Right cardiac atrium (tissue), 5 donors: ENCODE measurements at regions of chr10 and their contacts with region 1.

Region 1: GRCh38 chr10:114470956-114471905 is 66.9 kb upstream of the AFAP1L2 start:
- DNase-seq: peak; percentile 53 to 82 (median 78)
- ATAC-seq: peak; percentile 81 to 85
- H3K4me3 ChIP-seq: no peak overlapping the region
- H3K27ac ChIP-seq: peak overlapping the region; percentile 62
- H3K4me1 ChIP-seq: peaks cover 6% of the 10 kb centered on the region
- H3K27me3 ChIP-seq: no peaks in the 10 kb centered on the region

Region 2: GRCh38 chr10:114541081-114541796 is 70.0 kb after region 1 on chr10:
- intact Hi-C with region 1: loop called in 3 of 4 experiments (anchors 5 kb)
- DNase-seq: peak; percentile 82 to 88 (median 82)
- ATAC-seq: peak; percentile 94 to 97
- H3K4me3 ChIP-seq: no peak overlapping the region
- H3K27ac ChIP-seq: peak overlapping the region; percentile 87
- H3K4me1 ChIP-seq: peaks cover 20% of the 10 kb centered on the region
- H3K27me3 ChIP-seq: no peaks in the 10 kb centered on the region

Region 3: GRCh38 chr10:114703377-114704107 is 232.3 kb after region 1 on chr10:
- intact Hi-C with region 1: loop called in 1 of 4 experiments (anchors 10 kb)
- DNase-seq: no peak
- ATAC-seq: peak; percentile 44 to 52
- H3K4me3 ChIP-seq: no peak overlapping the region
- H3K27ac ChIP-seq: no peak overlapping the region
- H3K4me1 ChIP-seq: peaks cover 2% of the 10 kb centered on the region
- H3K27me3 ChIP-seq: no peaks in the 10 kb centered on the region

Region 4: DNA sequence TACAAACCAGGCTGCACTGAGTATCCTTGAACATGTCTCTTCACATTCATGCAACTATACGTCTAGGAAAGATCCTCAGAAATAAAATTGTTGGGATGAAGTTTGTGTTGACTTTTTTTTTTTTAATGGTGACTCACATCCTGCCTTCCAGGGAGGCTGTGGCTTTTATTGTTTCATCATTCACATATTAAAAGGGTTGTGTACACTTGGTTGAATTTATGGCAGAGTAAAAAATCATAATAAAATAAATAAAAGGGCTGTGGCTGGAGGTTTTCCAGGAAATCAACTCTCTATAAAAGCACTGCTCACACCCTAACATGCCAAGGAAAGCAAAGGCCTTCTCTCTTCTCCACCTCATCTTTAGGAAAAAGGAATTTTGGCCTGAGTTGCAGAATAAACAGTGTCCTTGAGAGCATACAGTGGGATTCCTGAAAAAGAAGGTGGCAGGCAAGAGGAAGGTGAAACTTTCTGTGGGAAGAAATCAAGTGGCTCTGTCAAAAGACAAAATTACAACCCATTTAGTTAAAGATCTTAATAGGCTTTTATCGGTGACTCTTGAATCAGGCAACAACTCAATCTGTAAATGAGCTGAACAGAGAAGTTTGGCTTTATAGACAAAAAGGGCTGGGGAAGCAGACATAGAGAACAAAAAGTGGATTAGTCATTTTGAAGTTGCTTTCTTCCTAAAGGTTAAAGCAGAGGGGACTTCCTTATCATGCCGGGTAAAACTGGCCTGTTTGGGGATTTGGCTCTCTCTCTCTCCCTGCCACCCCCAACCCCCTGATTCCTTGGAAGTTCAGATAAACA is 308.8 kb after region 1 on chr10:
- intact Hi-C with region 1: loop called in 3 of 4 experiments (anchors 5 to 10 kb)
- DNase-seq: no peak
- ATAC-seq: peak; percentile 45 to 78
- H3K4me3 ChIP-seq: no peak overlapping the region
- H3K27ac ChIP-seq: peak overlapping the region; percentile 45
- H3K4me1 ChIP-seq: no peaks in the 10 kb centered on the region
- H3K27me3 ChIP-seq: no peaks in the 10 kb centered on the region

Region 5: DNA sequence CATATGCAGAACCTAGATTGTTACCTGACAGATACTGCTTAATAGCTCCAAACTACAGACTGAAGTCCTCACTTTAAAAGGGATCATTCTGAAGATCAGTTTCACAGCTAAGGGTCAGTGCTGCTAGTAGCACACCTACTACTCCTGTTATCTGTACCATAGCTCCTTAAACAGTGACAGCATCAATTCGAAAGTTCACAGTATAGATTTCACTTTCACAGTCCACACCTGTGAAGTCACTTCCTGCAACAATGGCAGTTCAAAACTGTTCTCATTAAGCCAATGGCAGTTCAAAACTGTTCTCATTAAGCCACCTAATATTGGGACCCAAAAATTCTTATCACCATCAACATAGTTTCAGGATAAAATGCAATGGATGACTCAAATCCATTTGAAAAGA is 339.7 kb after region 1 on chr10:
- intact Hi-C with region 1: loop called in 1 of 4 experiments (anchors 10 kb)
- DNase-seq: no peak
- ATAC-seq: no peak
- H3K4me3 ChIP-seq: no peak overlapping the region
- H3K27ac ChIP-seq: no peak overlapping the region
- H3K4me1 ChIP-seq: no peaks in the 10 kb centered on the region
- H3K27me3 ChIP-seq: no peaks in the 10 kb centered on the region